Naive thymus-derived CD4-positive, alpha-beta T cell (primary cell): ENCODE measurements at regions of chr1 and their contacts with region 1.

Region 1: DNA sequence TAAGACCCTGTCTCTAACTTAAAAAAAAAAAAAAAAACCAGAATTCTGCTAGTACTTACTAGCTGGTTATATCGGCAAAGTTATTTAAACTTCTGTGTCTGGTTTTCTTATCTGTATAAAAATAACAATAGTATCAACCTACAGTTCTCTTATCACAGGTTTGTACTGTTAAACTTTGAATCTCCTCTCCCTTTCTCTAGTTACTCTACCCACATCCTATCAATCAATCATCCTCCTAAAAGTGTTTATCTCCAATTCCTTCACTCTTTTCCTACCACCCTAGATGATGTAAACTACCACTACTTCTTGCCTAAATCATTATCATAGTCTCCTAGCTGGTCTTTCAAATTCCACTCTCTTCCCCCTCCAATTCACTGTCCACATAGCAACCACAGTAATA is 27.6 kb downstream of the USP33 start:
- DNase-seq: no peak
- ATAC-seq: no peak
- H3K4me3 ChIP-seq: no peak overlapping the region
- H3K4me3 Mint-ChIP-seq: no peak overlapping the region
- H3K27ac ChIP-seq: no peak overlapping the region
- H3K27ac Mint-ChIP-seq: peak overlapping the region in 6 of 9 donors; percentile 12 to 88 (median 42)
- H3K4me1 ChIP-seq: no peaks in the 10 kb centered on the region
- H3K4me1 Mint-ChIP-seq: peaks cover 0 to 3% (median 0%) of the 10 kb centered on the region in 7 donors
- H3K27me3 ChIP-seq: no peaks in the 10 kb centered on the region
- H3K27me3 Mint-ChIP-seq: no peaks in the 10 kb centered on the region

Region 2: GRCh38 chr1:76541618-76542017 is 1190.5 kb before region 1 on chr1:
- CTCF ChIA-PET with region 1: no interaction called
- POLR2A ChIA-PET with region 1: no interaction called
- intact Hi-C with region 1: no loop called
- DNase-seq: no peak
- ATAC-seq: no peak
- H3K4me3 ChIP-seq: no peak overlapping the region
- H3K4me3 Mint-ChIP-seq: no peak overlapping the region
- H3K27ac ChIP-seq: no peak overlapping the region
- H3K27ac Mint-ChIP-seq: no peak overlapping the region
- H3K4me1 ChIP-seq: no peaks in the 10 kb centered on the region
- H3K4me1 Mint-ChIP-seq: peaks cover 0 to 5% (median 0%) of the 10 kb centered on the region in 7 donors
- H3K27me3 ChIP-seq: no peaks in the 10 kb centered on the region
- H3K27me3 Mint-ChIP-seq: no peaks in the 10 kb centered on the region

Region 3: DNA sequence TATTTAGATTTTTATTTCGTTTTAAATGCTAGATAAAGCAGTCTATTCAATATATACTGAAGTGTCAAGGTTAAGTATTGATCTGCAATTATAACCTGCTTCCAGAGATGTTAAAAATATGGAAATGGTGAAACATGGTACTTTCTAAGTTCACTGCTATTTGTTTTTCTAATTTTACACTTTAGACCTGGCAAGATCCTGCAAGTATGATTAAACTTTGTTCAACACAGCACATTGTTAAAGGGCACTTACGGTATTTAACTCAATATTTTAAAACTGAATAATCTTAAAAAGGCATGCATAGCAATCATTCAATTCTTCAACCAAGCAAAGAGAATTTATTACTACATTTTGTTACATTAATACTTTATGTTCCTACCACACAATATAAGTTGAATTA is 13.9 kb before region 1 on chr1:
- CTCF ChIA-PET with region 1: no interaction called
- POLR2A ChIA-PET with region 1: no interaction called
- intact Hi-C with region 1: loop called in 1 of 2 experiments (anchors 2 kb)
- DNase-seq: no peak
- ATAC-seq: no peak
- H3K4me3 ChIP-seq: no peak overlapping the region
- H3K4me3 Mint-ChIP-seq: no peak overlapping the region
- H3K27ac ChIP-seq: no peak overlapping the region
- H3K27ac Mint-ChIP-seq: no peak overlapping the region
- H3K4me1 ChIP-seq: no peaks in the 10 kb centered on the region
- H3K4me1 Mint-ChIP-seq: peaks cover 0 to 6% (median 0%) of the 10 kb centered on the region in 7 donors
- H3K27me3 ChIP-seq: no peaks in the 10 kb centered on the region
- H3K27me3 Mint-ChIP-seq: no peaks in the 10 kb centered on the region